ENCODE measurements at regions of chr17 and their contacts with region 1.

Region 1: DNA sequence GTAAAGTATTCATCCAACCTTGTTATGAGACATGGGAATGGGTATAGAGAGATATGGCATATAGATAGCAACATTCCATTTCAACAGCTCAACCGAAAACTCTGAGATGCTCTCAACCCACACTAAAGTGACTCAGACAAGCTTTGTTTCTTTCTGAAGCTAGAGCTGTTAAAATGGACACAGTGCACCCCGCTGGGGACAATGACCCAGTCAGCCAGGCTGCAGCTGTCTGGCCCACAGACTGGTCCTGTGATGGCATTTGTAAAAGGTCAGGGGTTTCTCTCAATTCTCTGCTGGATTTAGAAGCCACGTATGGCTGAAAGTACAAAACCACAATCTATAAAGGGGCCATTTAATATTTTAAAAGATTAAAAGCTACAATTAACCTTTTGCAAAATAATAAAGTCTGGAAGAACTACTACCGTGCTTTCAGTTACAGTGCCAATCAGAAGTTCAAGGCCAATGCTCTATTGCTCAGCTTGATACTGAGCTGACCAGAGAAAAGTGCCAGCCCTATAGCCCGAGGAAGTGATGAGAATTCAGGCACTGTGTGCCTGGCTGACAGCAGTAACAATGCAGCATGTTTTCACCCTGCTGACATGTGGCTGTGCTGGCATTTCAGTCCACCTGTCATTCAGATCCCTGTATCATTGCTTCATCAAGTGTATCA is 60.2 kb downstream of the TEX2 start:
- DNase-seq: peak; percentile 83
- H3K4me3 ChIP-seq: no peak overlapping the region
- H3K27ac ChIP-seq: peak overlapping the region; percentile 42
- H3K4me1 ChIP-seq: peaks cover 41% of the 10 kb centered on the region
- H3K27me3 ChIP-seq: no peaks in the 10 kb centered on the region
- CTCF ChIP-seq: no peak

Region 2: GRCh38 chr17:64145757-64146417 is 56.9 kb before region 1 on chr17:
- CTCF ChIA-PET with region 1: no interaction called
- dilution Hi-C with region 1: no loop called
- in situ Hi-C with region 1: no loop called
- intact Hi-C with region 1: loop called (anchors 5 kb)
- DNase-seq: peak; percentile 98
- H3K4me3 ChIP-seq: peak overlapping the region; percentile 76 to 89 (median 79)
- H3K27ac ChIP-seq: peak overlapping the region; percentile 76
- H3K4me1 ChIP-seq: peaks cover 8% of the 10 kb centered on the region
- H3K27me3 ChIP-seq: no peaks in the 10 kb centered on the region
- CTCF ChIP-seq: no peak

Region 3: DNA sequence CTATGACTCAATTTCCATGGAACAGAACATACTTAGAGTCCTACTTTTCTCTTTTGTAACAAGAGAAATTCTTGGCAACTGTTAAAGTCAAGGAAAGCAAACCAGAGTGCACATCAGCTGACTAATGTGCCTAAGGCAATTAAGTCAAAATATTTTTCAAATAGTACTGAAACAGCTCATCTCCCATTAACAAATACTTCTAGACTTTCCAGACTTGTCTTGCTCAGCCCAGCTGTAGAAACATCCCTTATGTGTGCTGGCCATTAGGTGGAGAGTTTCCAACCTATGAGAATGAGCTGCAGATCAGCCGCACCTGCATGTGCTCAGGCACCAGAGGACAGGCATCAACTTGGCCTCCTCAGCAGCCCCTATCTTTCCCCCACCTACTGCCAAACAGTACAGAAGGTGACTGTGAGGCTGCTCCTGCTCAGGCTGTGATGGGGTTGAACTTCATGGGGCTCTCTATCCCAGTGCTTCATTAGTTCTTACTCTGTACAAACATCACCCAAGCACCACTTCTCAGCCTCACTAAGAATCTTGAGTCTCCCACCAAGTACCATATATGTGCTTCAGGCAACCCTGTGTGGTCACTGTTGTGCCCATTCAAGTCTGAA is 28.1 kb after region 1 on chr17:
- CTCF ChIA-PET with region 1: no interaction called
- dilution Hi-C with region 1: no loop called
- in situ Hi-C with region 1: no loop called
- intact Hi-C with region 1: loop called (anchors 2 kb)
- DNase-seq: peak; percentile 97
- H3K4me3 ChIP-seq: no peak overlapping the region
- H3K27ac ChIP-seq: peak overlapping the region; percentile 67
- H3K4me1 ChIP-seq: peaks cover 32% of the 10 kb centered on the region
- H3K27me3 ChIP-seq: no peaks in the 10 kb centered on the region
- CTCF ChIP-seq: peak in 1 of 2 donors; percentile 32